ENCODE measurements at regions of chr1 and their contacts with region 1.

Region 1: DNA sequence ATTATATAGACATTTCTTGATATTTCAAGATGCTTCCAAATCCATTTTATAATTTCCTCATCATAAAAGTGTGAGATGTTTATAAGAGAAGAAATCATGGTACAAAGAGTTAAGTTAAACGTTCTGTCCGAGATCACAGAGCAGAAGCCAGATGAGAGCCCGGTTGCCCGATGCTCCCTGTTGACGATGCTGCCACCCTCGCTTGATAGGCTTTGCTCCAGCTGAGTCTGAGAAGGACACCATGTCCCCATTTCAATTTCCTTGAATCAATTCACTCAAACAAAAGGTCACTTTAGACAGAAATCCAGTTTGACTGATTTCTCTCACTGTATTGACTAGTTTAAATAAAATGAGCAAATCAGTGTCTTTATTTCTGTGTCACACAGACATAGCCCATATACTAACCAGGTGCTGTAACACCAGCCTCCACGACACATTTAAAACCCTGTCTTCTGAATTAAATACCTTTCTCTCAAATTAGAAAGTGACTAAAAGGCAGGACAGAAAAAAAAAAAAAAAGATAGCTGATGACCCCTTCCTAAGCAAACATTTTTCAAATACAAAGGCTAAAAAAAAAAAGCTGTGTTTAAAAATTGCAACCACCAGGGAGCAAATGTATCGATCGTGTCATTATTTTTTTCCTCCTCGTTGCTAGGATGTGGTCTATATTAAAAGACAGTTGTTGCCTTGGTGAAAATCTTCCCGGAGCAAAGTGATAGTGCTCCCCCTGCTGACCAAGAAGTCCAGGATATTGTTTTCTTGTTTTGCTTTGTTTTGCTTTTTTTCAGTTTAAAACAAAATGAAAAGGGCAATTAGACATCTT is 35.2 kb downstream of the DNASE2B start:
- DNase-seq: peak; percentile 65 to 70
- H3K4me3 ChIP-seq: no peak overlapping the region
- H3K27ac ChIP-seq: peak overlapping the region; percentile 12 to 29 (median 25)
- H3K4me1 ChIP-seq: no peaks in the 10 kb centered on the region
- H3K27me3 ChIP-seq: no peaks in the 10 kb centered on the region
- CTCF ChIP-seq: peak; percentile 61 to 95 (median 72)
- POLR2A ChIP-seq: no peak

Region 2: GRCh38 chr1:83931658-83932253 is 501.7 kb before region 1 on chr1:
- intact Hi-C with region 1: loop called (anchors 10 kb)
- DNase-seq: peak; percentile 2 to 6
- H3K4me3 ChIP-seq: no peak overlapping the region
- H3K27ac ChIP-seq: no peak overlapping the region
- H3K4me1 ChIP-seq: peaks cover 0 to 5% of the 10 kb centered on the region in 2 donors
- H3K27me3 ChIP-seq: no peaks in the 10 kb centered on the region
- CTCF ChIP-seq: peak in 5 of 6 experiments; percentile 45 to 80 (median 76)
- POLR2A ChIP-seq: no peak

Region 3: DNA sequence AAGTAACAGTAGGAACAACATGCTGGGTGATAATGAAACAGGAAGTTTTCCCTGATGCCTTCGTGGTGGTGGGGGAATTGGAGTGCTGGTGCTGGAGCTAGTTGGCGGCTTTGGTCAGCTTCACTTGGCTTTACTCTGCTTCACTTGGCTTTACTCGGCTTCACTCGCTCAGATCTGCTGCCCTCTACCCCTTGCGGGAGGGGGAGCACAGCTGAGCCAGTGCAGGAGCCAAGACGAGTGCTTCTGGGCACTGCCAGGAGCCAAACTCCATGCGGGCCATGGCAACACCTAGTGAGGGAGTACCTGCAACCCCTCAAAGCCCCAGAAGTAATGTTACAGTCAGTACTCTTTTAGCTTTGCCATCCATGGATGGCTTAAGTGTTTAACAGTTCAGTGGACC is 300.0 kb before region 1 on chr1:
- intact Hi-C with region 1: loop called (anchors 5 kb)
- DNase-seq: no peak
- H3K4me3 ChIP-seq: no peak overlapping the region
- H3K27ac ChIP-seq: no peak overlapping the region
- H3K4me1 ChIP-seq: no peaks in the 10 kb centered on the region
- H3K27me3 ChIP-seq: no peaks in the 10 kb centered on the region
- CTCF ChIP-seq: no peak
- POLR2A ChIP-seq: no peak

Region 4: DNA sequence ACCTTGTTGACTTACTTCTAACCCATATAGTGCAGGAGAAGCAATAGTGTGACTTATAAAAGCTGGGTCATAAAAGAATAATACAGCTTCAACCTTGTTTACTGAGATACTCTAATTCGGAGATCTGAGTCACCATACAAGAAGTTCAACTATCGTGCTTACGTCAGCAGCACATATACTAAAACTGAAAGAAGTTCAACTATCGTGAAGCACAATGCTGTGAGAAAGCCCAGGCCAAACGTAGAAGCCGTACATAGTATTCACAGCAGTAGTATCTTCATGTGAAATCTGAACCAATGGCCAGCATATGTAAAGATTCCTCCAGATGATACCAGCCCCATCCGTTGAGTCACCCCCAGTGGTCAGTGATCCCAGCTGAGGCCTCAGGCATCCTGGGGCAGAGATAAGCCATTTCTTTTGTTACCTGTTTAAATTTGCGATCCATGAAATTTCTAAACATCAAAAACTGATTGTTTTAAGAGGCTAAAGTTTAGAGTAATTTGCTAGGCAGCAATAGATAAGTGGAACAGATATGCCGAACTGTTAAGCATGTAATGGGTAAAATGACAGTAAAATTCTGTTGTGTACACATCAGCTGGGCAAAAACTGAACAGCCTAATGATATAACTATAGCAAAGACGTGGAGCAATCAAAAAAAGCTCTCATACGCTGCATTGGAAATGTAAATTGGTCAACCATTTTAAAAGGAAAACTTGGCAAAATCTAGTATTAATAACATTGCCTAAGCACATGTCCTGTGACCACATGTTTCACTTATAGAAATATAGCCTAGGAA is 185.8 kb before region 1 on chr1:
- intact Hi-C with region 1: no loop called
- DNase-seq: no peak
- H3K4me3 ChIP-seq: no peak overlapping the region
- H3K27ac ChIP-seq: no peak overlapping the region
- H3K4me1 ChIP-seq: peaks cover 0 to 4% of the 10 kb centered on the region in 2 donors
- H3K27me3 ChIP-seq: no peaks in the 10 kb centered on the region
- CTCF ChIP-seq: no peak
- POLR2A ChIP-seq: no peak

Region 5: GRCh38 chr1:84260864-84261518 is 172.5 kb before region 1 on chr1:
- intact Hi-C with region 1: loop called (anchors 10 kb)
- DNase-seq: no peak
- H3K4me3 ChIP-seq: no peak overlapping the region
- H3K27ac ChIP-seq: peak overlapping the region; percentile 11 to 34 (median 29)
- H3K4me1 ChIP-seq: peaks cover 14 to 26% of the 10 kb centered on the region in 2 donors
- H3K27me3 ChIP-seq: no peaks in the 10 kb centered on the region
- CTCF ChIP-seq: no peak
- POLR2A ChIP-seq: no peak

Region 6: GRCh38 chr1:84330125-84330984 is 103.1 kb before region 1 on chr1:
- intact Hi-C with region 1: no loop called
- DNase-seq: peak; percentile 52 to 59
- H3K4me3 ChIP-seq: no peak overlapping the region
- H3K27ac ChIP-seq: peak overlapping the region; percentile 59 to 68 (median 63)
- H3K4me1 ChIP-seq: peaks cover 31 to 42% of the 10 kb centered on the region in 2 donors
- H3K27me3 ChIP-seq: no peaks in the 10 kb centered on the region
- CTCF ChIP-seq: no peak
- POLR2A ChIP-seq: peak in 1 of 2 donors; percentile 23

Region 7: GRCh38 chr1:84525779-84526178 is 92.3 kb after region 1 on chr1:
- intact Hi-C with region 1: no loop called
- DNase-seq: no peak
- H3K4me3 ChIP-seq: no peak overlapping the region
- H3K27ac ChIP-seq: no peak overlapping the region
- H3K4me1 ChIP-seq: no peaks in the 10 kb centered on the region
- H3K27me3 ChIP-seq: no peaks in the 10 kb centered on the region
- CTCF ChIP-seq: no peak
- POLR2A ChIP-seq: no peak

Region 8: GRCh38 chr1:84753516-84754385 is 320.3 kb after region 1 on chr1:
- intact Hi-C with region 1: loop called (anchors 10 kb)
- DNase-seq: peak; percentile 70 to 72
- H3K4me3 ChIP-seq: no peak overlapping the region
- H3K27ac ChIP-seq: no peak overlapping the region
- H3K4me1 ChIP-seq: no peaks in the 10 kb centered on the region
- H3K27me3 ChIP-seq: no peaks in the 10 kb centered on the region
- CTCF ChIP-seq: peak; percentile 83 to 95 (median 90)
- POLR2A ChIP-seq: no peak